H1 (cell line): ENCODE measurements at regions of chr3 and their contacts with region 1.

Region 1: GRCh38 chr3:179322286-179323196 is at the start of gene ZNF639:
- DNase-seq: peak; percentile 77 to 90
- H3K4me3 ChIP-seq: peak within 1 kb of the TSS; percentile 65 to 90 (median 72)
- H3K27ac ChIP-seq: peak within 1 kb of the TSS; percentile 81
- H3K4me1 ChIP-seq: peaks cover 0 to 6% (median 3%) of the 10 kb centered on the region in 4 experiments; a peak in 4 of 7 replicates
- H3K27me3 ChIP-seq: no peaks in the 10 kb centered on the region
- CTCF ChIP-seq: peak; percentile 71 to 90 (median 76)
- EP300 ChIP-seq: peak in 1 of 2 experiments; percentile 96; a peak in 2 of 3 replicates
- POLR2A ChIP-seq: peak; percentile 68 to 79
- RAD21 ChIP-seq: peak; percentile 14 to 38; a peak in 3 of 4 replicates
- total RNA-seq, gene ZNF639: 41.4 and 43.0 TPM in 2 replicates

Region 2: GRCh38 chr3:179015551-179016020 is 307.0 kb before region 1 on chr3:
- CTCF ChIA-PET with region 1: interaction called, 27 read pairs
- POLR2A ChIA-PET with region 1: no interaction called
- DNase-seq: peak; percentile 23 to 55
- H3K4me3 ChIP-seq: no peak overlapping the region
- H3K27ac ChIP-seq: no peak overlapping the region
- H3K4me1 ChIP-seq: no peaks in the 10 kb centered on the region
- H3K27me3 ChIP-seq: no peaks in the 10 kb centered on the region
- CTCF ChIP-seq: peak in 2 of 3 experiments; percentile 77 to 90; a peak in 3 of 4 replicates
- EP300 ChIP-seq: no peak
- POLR2A ChIP-seq: no peak
- RAD21 ChIP-seq: peak; percentile 92 to 93

Region 3: GRCh38 chr3:179063945-179064560 is 258.5 kb before region 1 on chr3:
- CTCF ChIA-PET with region 1: interaction called, 81 read pairs
- POLR2A ChIA-PET with region 1: no interaction called
- DNase-seq: no peak
- H3K4me3 ChIP-seq: no peak overlapping the region
- H3K27ac ChIP-seq: no peak overlapping the region
- H3K4me1 ChIP-seq: peaks cover 0 to 5% (median 0%) of the 10 kb centered on the region in 4 experiments; a peak in 1 of 7 replicates
- H3K27me3 ChIP-seq: no peaks in the 10 kb centered on the region
- CTCF ChIP-seq: no peak
- EP300 ChIP-seq: no peak
- POLR2A ChIP-seq: no peak
- RAD21 ChIP-seq: no peak

Region 4: GRCh38 chr3:179141890-179142289 is 180.7 kb before region 1 on chr3:
- CTCF ChIA-PET with region 1: interaction called, 30 read pairs
- POLR2A ChIA-PET with region 1: no interaction called
- DNase-seq: no peak
- H3K4me3 ChIP-seq: no peak overlapping the region
- H3K27ac ChIP-seq: no peak overlapping the region
- H3K4me1 ChIP-seq: no peaks in the 10 kb centered on the region
- H3K27me3 ChIP-seq: no peaks in the 10 kb centered on the region
- CTCF ChIP-seq: no peak
- EP300 ChIP-seq: no peak
- POLR2A ChIP-seq: no peak
- RAD21 ChIP-seq: no peak

Region 5: GRCh38 chr3:179309225-179310078 is 13.1 kb before region 1 on chr3:
- CTCF ChIA-PET with region 1: interaction called, 14 read pairs
- POLR2A ChIA-PET with region 1: interaction called, 5 read pairs
- DNase-seq: no peak
- H3K4me3 ChIP-seq: no peak overlapping the region
- H3K27ac ChIP-seq: no peak overlapping the region
- H3K4me1 ChIP-seq: no peaks in the 10 kb centered on the region
- H3K27me3 ChIP-seq: no peaks in the 10 kb centered on the region
- CTCF ChIP-seq: no peak
- EP300 ChIP-seq: no peak
- POLR2A ChIP-seq: no peak
- RAD21 ChIP-seq: no peak

Region 6: DNA sequence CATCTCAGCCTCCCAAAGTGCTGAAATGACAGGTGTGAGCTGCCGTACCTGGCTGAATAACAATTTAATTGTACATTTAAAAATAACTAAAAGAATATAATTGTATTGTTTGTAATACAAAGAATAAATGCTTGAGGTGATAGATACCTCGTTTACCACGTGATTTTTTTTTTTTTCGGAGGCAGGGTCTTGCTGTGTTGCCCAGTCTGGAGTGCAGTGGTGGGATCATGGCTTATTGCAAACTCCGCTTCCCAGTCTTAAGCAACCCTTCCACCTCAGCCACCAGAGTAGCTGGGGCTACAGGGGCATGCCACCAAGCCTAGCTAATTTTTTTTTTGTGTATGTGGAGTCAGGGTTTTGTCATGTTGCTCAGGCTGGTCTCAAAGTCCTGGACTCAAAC is 40.8 kb after region 1 on chr3:
- CTCF ChIA-PET with region 1: no interaction called
- POLR2A ChIA-PET with region 1: no interaction called
- DNase-seq: no peak
- H3K4me3 ChIP-seq: no peak overlapping the region
- H3K27ac ChIP-seq: no peak overlapping the region
- H3K4me1 ChIP-seq: no peaks in the 10 kb centered on the region
- H3K27me3 ChIP-seq: no peaks in the 10 kb centered on the region
- CTCF ChIP-seq: no peak
- EP300 ChIP-seq: no peak
- POLR2A ChIP-seq: no peak
- RAD21 ChIP-seq: no peak